ENCODE measurements at regions of chr13 and their contacts with region 1.

Region 1: DNA sequence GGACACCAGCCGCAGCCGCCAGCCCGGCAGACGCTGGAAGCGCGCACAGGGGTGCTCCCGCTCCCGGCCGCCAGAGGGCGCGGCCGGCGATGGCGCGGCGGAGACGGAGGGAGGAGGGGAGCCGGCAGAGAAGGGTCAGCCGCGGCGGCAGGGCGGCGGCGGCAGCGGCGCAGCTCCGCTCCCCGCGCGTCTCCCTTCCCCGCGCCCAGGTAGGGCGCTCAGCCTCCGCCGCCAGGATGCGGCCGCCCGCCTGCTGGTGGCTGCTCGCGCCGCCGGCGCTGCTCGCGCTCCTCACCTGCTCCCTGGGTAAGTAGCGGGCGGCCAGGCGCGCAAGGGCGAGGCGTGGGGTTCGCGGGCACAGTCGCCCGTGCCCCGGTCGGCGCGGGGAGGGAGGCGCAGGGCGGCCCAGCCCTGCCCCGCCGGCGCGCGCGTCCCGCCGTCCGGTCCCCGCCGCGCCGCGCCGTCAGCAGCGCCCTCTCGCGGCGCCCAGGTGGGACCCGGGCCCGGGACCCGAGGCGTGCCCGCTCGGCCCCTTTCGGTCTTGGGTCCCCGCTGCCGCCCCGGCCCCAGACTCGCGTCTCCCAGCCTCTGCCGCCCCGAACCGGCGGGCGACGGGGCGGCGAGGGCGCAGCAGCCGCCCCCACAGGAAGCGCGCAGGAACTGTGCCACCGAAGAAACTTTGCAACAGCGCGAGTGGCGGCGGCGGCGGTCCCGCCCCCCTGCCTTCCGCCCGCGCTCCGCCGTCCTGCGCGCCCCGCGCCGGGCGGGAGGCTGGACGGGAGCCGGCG is at the start of gene B3GLCT:
- DNase-seq: no peak
- H3K4me3 ChIP-seq: peak within 1 kb of the TSS; percentile 73 to 94 (median 76)
- H3K27ac ChIP-seq: peak within 1 kb of the TSS; percentile 95 to 98 (median 96)
- H3K4me1 ChIP-seq: peaks cover 13 to 23% (median 19%) of the 10 kb centered on the region in 4 donors
- H3K27me3 ChIP-seq: no peaks in the 10 kb centered on the region
- CTCF ChIP-seq: peak; percentile 87 to 91 (median 87)
- EP300 ChIP-seq: no peak
- POLR2A ChIP-seq: no peak
- total RNA-seq, gene B3GLCT: 5.2 to 8.8 (median 5.6) TPM

Region 2: GRCh38 chr13:31161828-31162590 is 38.0 kb before region 1 on chr13 and contains the start of gene HSPH1:
- intact Hi-C with region 1: loop called (anchors 5 kb)
- DNase-seq: peak; percentile 99
- H3K4me3 ChIP-seq: peak within 1 kb of the TSS; percentile 64 to 87 (median 75)
- H3K27ac ChIP-seq: peak within 1 kb of the TSS; percentile 85 to 95 (median 92)
- H3K4me1 ChIP-seq: peaks cover 15 to 31% (median 29%) of the 10 kb centered on the region in 4 donors
- H3K27me3 ChIP-seq: no peaks in the 10 kb centered on the region
- CTCF ChIP-seq: peak in 2 of 3 experiments; percentile 18 to 35
- EP300 ChIP-seq: no peak
- POLR2A ChIP-seq: peak; percentile 36
- total RNA-seq, gene HSPH1: 33.4 to 48.2 (median 42.1) TPM

Region 3: GRCh38 chr13:31424117-31424729 is 224.2 kb after region 1 on chr13:
- intact Hi-C with region 1: loop called (anchors 10 kb)
- DNase-seq: no peak
- H3K4me3 ChIP-seq: no peak overlapping the region
- H3K27ac ChIP-seq: no peak overlapping the region
- H3K4me1 ChIP-seq: peaks cover 4 to 10% (median 9%) of the 10 kb centered on the region in 4 donors
- H3K27me3 ChIP-seq: no peaks in the 10 kb centered on the region
- CTCF ChIP-seq: peak; percentile 70 to 85 (median 74)
- EP300 ChIP-seq: no peak
- POLR2A ChIP-seq: no peak

Measured in esophagus muscularis mucosa (tissue), 4 donors.